GM13977 (cell line): ENCODE measurements at regions of chr2 and their contacts with region 1.

Region 1: GRCh38 chr2:219041252-219041651 is at the start of gene CFAP65:
- DNase-seq: peak; percentile 55
- CTCF ChIP-seq: no peak

Region 2: DNA sequence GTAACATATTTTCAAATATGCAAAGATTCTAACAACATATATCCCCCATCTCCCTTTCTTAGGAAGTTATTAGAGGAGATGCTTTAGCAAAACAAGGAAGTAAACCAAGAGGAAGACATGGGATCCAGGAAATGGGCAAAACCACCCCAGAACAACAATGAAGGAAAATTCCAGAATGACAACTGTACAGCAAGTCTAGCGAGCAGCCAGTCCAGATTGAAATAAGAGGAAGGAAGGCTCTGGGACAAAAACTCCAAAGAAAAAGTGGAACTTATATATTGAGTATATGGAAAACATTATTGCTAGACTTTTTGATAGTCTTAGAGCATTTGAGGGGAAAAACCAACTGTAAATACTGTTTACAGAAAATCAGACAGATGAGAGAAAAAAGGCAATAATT is 827.1 kb before region 1 on chr2:
- in situ Hi-C with region 1: no loop called
- DNase-seq: no peak
- CTCF ChIP-seq: no peak

Region 3: DNA sequence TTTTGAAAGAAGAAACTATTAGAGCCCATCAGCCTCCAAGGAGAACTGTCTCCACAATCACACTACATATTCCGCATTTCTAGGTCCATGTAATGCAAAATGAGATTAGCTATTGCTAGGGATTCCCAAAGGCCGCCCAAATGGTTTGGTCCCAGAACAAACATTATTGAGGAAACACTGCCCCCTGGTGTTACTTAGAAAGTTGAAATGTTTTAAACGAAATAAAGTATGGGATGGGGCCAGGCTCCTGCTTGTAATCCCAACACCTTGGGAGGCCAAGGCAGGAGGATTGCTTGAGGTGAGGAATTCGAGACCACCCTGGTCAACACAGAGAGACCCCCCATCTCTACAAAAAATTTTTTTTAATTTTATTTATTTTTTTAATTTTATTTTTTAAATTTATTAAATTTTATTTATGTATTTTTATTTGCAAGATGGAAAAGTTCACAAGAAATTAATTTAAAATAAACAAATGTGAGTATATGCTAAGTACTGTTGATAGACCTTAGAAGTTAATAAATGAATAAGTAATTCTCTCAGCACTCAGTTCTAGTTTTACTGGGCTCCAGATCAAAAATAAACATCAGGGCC is 113.9 kb after region 1 on chr2:
- in situ Hi-C with region 1: loop called (anchors 10 kb)
- DNase-seq: peak; percentile 65
- CTCF ChIP-seq: peak; percentile 52